HepG2 (cell line): ENCODE measurements at regions of chr6 and their contacts with region 1.

Region 1: GRCh38 chr6:131949909-131950766 is 1.0 kb downstream of the CCN2 start:
- DNase-seq: peak; percentile 75
- ATAC-seq: peak; percentile 60
- H3K4me3 ChIP-seq: peak overlapping the region; percentile 78 to 94 (median 93)
- H3K27ac ChIP-seq: peak overlapping the region; percentile 83
- H3K4me1 ChIP-seq: peaks cover 68% of the 10 kb centered on the region
- H3K27me3 ChIP-seq: peaks cover 0 to 3% of the 10 kb centered on the region in 2 experiments; a peak in 1 of 5 replicates
- CTCF ChIP-seq: peak; percentile 83
- EP300 ChIP-seq: no peak
- POLR2A ChIP-seq: peak; percentile 55 to 79
- RAD21 ChIP-seq: peak; percentile 80

Region 2: GRCh38 chr6:131929264-131929663 is 20.9 kb before region 1 on chr6:
- CTCF ChIA-PET with region 1: interaction called, 3 read pairs
- POLR2A ChIA-PET with region 1: interaction called, 35 read pairs
- in situ Hi-C with region 1: no loop called
- intact Hi-C with region 1: no loop called
- DNase-seq: no peak
- ATAC-seq: peak; percentile 65
- H3K4me3 ChIP-seq: no peak overlapping the region
- H3K27ac ChIP-seq: no peak overlapping the region
- H3K4me1 ChIP-seq: peaks cover 29% of the 10 kb centered on the region
- H3K27me3 ChIP-seq: no peaks in the 10 kb centered on the region
- CTCF ChIP-seq: peak; percentile 50
- EP300 ChIP-seq: no peak
- POLR2A ChIP-seq: no peak
- RAD21 ChIP-seq: no peak

Region 3: DNA sequence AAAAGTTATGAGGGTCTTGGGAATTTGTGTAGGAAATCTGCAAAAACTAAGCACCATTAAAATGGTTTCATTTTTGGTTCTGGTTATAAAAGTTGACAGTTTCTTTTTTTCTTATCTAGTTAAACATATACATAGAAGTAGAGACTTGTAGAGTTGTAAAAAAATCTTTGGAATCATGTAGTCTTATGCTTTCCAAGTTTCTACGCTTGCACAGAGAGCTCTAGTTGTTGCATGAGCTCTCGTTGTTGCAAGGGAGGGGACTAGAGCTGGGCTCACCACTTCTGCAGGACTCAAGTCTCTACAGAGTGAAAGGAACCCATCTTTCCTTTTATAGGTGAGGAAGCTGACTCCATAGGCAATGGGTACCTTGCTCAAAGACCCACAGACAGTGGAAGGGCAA is 22.6 kb after region 1 on chr6:
- CTCF ChIA-PET with region 1: interaction called, 3 read pairs
- POLR2A ChIA-PET with region 1: interaction called, 400 read pairs
- in situ Hi-C with region 1: no loop called
- intact Hi-C with region 1: loop called (anchors 1 kb)
- DNase-seq: no peak
- ATAC-seq: no peak
- H3K4me3 ChIP-seq: no peak overlapping the region
- H3K27ac ChIP-seq: no peak overlapping the region
- H3K4me1 ChIP-seq: peaks cover 47% of the 10 kb centered on the region
- H3K27me3 ChIP-seq: no peaks in the 10 kb centered on the region
- CTCF ChIP-seq: no peak
- EP300 ChIP-seq: no peak
- POLR2A ChIP-seq: no peak
- RAD21 ChIP-seq: no peak

Region 4: DNA sequence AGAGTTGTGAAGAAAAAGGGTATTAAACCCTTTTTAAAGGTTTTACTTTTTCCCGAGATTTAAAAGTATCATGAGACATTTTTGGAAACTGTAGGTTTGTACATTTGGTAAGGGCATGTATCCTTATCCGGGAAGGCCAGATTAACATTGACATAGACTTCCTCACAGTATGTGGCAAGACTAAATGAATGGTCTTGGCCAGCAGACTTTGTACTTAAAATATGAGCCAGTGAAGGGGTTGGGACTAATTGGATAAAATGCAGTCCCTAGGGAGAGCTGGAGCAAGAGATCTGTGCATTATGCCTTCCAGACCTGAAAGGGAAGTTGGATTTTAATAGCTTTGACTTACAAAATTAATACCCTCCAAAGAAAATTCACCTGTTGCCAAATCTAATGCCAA is 61.4 kb after region 1 on chr6:
- CTCF ChIA-PET with region 1: no interaction called
- POLR2A ChIA-PET with region 1: interaction called, 12 read pairs
- in situ Hi-C with region 1: no loop called
- intact Hi-C with region 1: no loop called
- DNase-seq: no peak
- ATAC-seq: no peak
- H3K4me3 ChIP-seq: no peak overlapping the region
- H3K27ac ChIP-seq: no peak overlapping the region
- H3K4me1 ChIP-seq: peaks cover 42% of the 10 kb centered on the region
- H3K27me3 ChIP-seq: no peaks in the 10 kb centered on the region
- CTCF ChIP-seq: no peak
- EP300 ChIP-seq: no peak
- POLR2A ChIP-seq: no peak
- RAD21 ChIP-seq: no peak

Region 5: GRCh38 chr6:132161283-132161682 is 211.1 kb after region 1 on chr6:
- CTCF ChIA-PET with region 1: interaction called, 21 read pairs
- POLR2A ChIA-PET with region 1: interaction called, 4 read pairs
- in situ Hi-C with region 1: loop called (anchors 10 kb)
- intact Hi-C with region 1: loop called (anchors 1 kb)
- DNase-seq: peak; percentile 45
- ATAC-seq: peak; percentile 86
- H3K4me3 ChIP-seq: no peak overlapping the region
- H3K27ac ChIP-seq: no peak overlapping the region
- H3K4me1 ChIP-seq: peaks cover 7% of the 10 kb centered on the region; the same call in 1 of the 2 replicates
- H3K27me3 ChIP-seq: no peaks in the 10 kb centered on the region
- CTCF ChIP-seq: peak; percentile 90
- EP300 ChIP-seq: no peak
- POLR2A ChIP-seq: no peak
- RAD21 ChIP-seq: peak; percentile 84

Region 6: GRCh38 chr6:132209351-132209750 is 259.2 kb after region 1 on chr6:
- CTCF ChIA-PET with region 1: no interaction called
- POLR2A ChIA-PET with region 1: no interaction called
- in situ Hi-C with region 1: no loop called
- intact Hi-C with region 1: no loop called
- DNase-seq: no peak
- ATAC-seq: peak; percentile 62
- H3K4me3 ChIP-seq: no peak overlapping the region
- H3K27ac ChIP-seq: no peak overlapping the region
- H3K4me1 ChIP-seq: no peaks in the 10 kb centered on the region
- H3K27me3 ChIP-seq: no peaks in the 10 kb centered on the region
- CTCF ChIP-seq: no peak
- EP300 ChIP-seq: no peak
- POLR2A ChIP-seq: no peak
- RAD21 ChIP-seq: no peak